ENCODE measurements at regions of chr13 and their contacts with region 1.

Region 1: GRCh38 chr13:44435142-44435982 is 61.7 kb downstream of the SERP2 start:
- DNase-seq: peak; percentile 91 to 98
- ATAC-seq: peak; percentile 79 to 87 (median 82)
- H3K4me3 ChIP-seq: peak overlapping the region; percentile 59 to 93 (median 70)
- H3K27ac ChIP-seq: peak overlapping the region; percentile 79 to 99 (median 94)
- H3K4me1 ChIP-seq: peaks cover 0 to 42% (median 41%) of the 10 kb centered on the region in 9 donors
- H3K27me3 ChIP-seq: no peaks in the 10 kb centered on the region
- CTCF ChIP-seq: no peak

Region 2: GRCh38 chr13:43838594-43839308 is 596.6 kb before region 1 on chr13:
- intact Hi-C with region 1: no loop called
- DNase-seq: no peak
- ATAC-seq: no peak
- H3K4me3 ChIP-seq: no peak overlapping the region
- H3K27ac ChIP-seq: no peak overlapping the region
- H3K4me1 ChIP-seq: no peaks in the 10 kb centered on the region
- H3K27me3 ChIP-seq: no peaks in the 10 kb centered on the region
- CTCF ChIP-seq: no peak

Region 3: GRCh38 chr13:43915451-43915850 is 519.9 kb before region 1 on chr13:
- intact Hi-C with region 1: loop called in 1 of 10 experiments (anchors 2 kb)
- DNase-seq: no peak
- ATAC-seq: no peak
- H3K4me3 ChIP-seq: no peak overlapping the region
- H3K27ac ChIP-seq: no peak overlapping the region
- H3K4me1 ChIP-seq: peaks cover 0 to 17% (median 12%) of the 10 kb centered on the region in 9 donors
- H3K27me3 ChIP-seq: peaks cover 0 to 93% (median 0%) of the 10 kb centered on the region in 7 donors
- CTCF ChIP-seq: no peak

Region 4: DNA sequence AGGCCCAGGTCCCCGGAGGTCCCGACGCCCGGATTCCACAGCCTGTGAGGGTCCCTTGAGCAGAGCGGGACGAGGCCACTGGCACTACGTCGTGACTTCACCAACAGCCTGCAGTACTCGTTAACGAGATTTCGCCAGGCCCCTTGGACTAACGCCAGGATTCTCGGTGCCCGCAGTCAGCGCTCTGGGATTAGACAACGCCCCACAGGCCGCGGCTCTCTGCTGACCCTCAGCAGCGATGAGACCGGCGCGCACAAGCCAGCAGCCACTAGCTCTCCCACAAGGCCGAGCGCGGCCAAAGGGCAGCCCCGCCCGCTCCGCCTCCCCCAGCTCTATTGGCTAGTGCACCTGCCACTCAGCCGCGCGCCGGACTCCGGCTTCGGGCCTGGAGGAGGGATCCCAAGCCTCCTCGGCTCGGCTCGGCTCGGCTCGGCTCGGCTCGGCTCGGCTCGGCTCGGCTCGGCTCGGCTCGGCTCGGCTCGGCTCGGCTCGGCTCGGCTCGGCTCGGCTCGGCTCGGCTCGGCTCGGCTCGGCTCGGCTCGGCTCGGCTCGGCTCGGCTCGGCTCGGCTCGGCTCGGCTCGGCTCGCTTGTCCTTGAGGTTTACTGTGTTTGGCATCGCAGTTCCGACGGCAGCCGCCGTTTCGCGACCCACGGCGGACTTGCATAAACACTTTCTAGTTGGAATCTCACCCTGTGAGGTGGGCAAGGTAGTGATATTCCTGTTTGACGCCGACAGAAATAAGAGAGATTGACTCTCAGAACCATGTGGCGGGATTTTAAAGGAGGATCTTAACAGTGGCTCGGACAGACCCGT is 293.4 kb before region 1 on chr13:
- intact Hi-C with region 1: loop called in 5 of 10 experiments (anchors 1 to 10 kb)
- DNase-seq: peak; percentile 98 to 99
- ATAC-seq: peak; percentile 99 to 100 (median 100)
- H3K4me3 ChIP-seq: peak overlapping the region; percentile 50 to 79 (median 58)
- H3K27ac ChIP-seq: peak overlapping the region; percentile 91 to 99 (median 96)
- H3K4me1 ChIP-seq: peaks cover 5 to 22% (median 10%) of the 10 kb centered on the region in 9 donors
- H3K27me3 ChIP-seq: no peaks in the 10 kb centered on the region
- CTCF ChIP-seq: peak in 2 of 9 donors; percentile 9 to 21

Region 5: GRCh38 chr13:44243198-44243857 is 192.0 kb before region 1 on chr13:
- intact Hi-C with region 1: loop called in 7 of 10 experiments (anchors 2 to 10 kb)
- DNase-seq: peak in 1 of 2 donors; percentile 57
- ATAC-seq: peak; percentile 60 to 94 (median 74)
- H3K4me3 ChIP-seq: no peak overlapping the region
- H3K27ac ChIP-seq: peak overlapping the region in 8 of 10 donors; percentile 11 to 69 (median 50)
- H3K4me1 ChIP-seq: peaks cover under 1 to 22% (median 4%) of the 10 kb centered on the region in 9 donors
- H3K27me3 ChIP-seq: no peaks in the 10 kb centered on the region
- CTCF ChIP-seq: peak in 8 of 9 donors; percentile 17 to 69 (median 56)

Region 6: GRCh38 chr13:44373601-44374348 is 61.6 kb before region 1 on chr13 and contains the start of gene SERP2:
- intact Hi-C with region 1: loop called in 1 of 10 experiments (anchors 10 kb)
- DNase-seq: peak; percentile 41 to 46
- ATAC-seq: peak; percentile 65 to 90 (median 76)
- H3K4me3 ChIP-seq: peak within 1 kb of the TSS; percentile 56 to 78 (median 74)
- H3K27ac ChIP-seq: peak within 1 kb of the TSS; percentile 22 to 79 (median 55)
- H3K4me1 ChIP-seq: peaks cover 0 to 15% (median 8%) of the 10 kb centered on the region in 9 donors
- H3K27me3 ChIP-seq: peaks cover 0 to 24% (median 0%) of the 10 kb centered on the region in 7 donors
- CTCF ChIP-seq: no peak
- total RNA-seq, gene SERP2: 10.0 to 18.6 (median 11.8) TPM